CD4-positive, alpha-beta memory T cell (primary cell): ENCODE measurements at regions of chr1 and their contacts with region 1.

Region 1: GRCh38 chr1:19661721-19662228 is 2.9 kb upstream of the HTR6 start:
- DNase-seq: peak in 4 of 5 donors; percentile 49 to 66 (median 60)
- H3K4me3 ChIP-seq: no peak overlapping the region
- H3K4me3 Mint-ChIP-seq: peak overlapping the region in 1 of 8 donors; percentile 54
- H3K27ac ChIP-seq: no peak overlapping the region
- H3K27ac Mint-ChIP-seq: peak overlapping the region in 2 of 7 donors; percentile 71 to 74
- H3K4me1 ChIP-seq: peaks cover 27% of the 10 kb centered on the region
- H3K4me1 Mint-ChIP-seq: peaks cover 18 to 43% (median 29%) of the 10 kb centered on the region in 4 donors
- H3K27me3 ChIP-seq: no peaks in the 10 kb centered on the region
- H3K27me3 Mint-ChIP-seq: peaks cover 0 to 18% of the 10 kb centered on the region in 2 donors

Region 2: DNA sequence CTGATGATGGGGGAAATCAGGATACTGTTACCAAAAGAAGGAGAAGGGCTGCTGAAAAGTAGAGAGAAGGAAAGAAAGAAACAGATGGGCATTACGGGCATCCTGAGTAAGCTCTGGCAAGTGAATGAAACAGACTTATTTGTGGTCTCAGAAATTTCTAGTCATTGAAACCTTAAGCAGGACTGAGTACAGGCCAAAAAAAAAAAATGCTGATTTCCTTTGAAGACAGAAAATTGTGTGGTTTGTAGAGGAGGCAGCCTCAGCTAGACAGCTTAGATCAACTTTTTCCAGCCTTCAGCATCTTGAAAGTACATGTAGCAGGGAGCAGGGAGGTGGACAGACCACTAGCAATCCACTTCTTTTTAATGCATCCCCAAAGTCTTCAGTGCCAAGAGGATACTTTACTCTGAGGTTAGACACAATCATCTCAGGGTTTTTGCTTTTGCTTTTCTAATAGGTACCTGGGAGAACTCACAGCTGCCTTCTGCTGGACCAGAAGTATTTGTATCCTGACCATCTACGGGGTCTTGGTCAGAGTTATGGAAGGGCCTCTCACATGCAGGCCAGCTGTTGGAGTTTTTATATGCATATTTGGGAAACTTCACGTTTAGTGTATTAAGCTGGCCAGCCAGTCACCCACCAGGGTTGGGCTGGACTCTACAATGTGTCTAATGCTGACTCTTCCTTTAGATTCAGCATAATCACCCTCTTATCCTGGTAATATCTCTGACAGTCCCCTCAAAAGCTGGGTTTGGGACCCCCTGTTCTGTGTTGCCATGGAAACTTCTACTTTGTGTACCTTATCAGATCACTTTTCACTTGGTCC is 165.8 kb before region 1 on chr1:
- CTCF ChIA-PET with region 1: no interaction called
- POLR2A ChIA-PET with region 1: no interaction called
- intact Hi-C with region 1: no loop called
- DNase-seq: no peak
- H3K4me3 ChIP-seq: no peak overlapping the region
- H3K4me3 Mint-ChIP-seq: peak overlapping the region in 1 of 8 donors; percentile 17
- H3K27ac ChIP-seq: no peak overlapping the region
- H3K27ac Mint-ChIP-seq: peak overlapping the region in 3 of 7 donors; percentile 5 to 48 (median 44)
- H3K4me1 ChIP-seq: no peaks in the 10 kb centered on the region
- H3K4me1 Mint-ChIP-seq: peaks cover 18 to 34% (median 22%) of the 10 kb centered on the region in 4 donors
- H3K27me3 ChIP-seq: no peaks in the 10 kb centered on the region
- H3K27me3 Mint-ChIP-seq: no peaks in the 10 kb centered on the region

Region 3: DNA sequence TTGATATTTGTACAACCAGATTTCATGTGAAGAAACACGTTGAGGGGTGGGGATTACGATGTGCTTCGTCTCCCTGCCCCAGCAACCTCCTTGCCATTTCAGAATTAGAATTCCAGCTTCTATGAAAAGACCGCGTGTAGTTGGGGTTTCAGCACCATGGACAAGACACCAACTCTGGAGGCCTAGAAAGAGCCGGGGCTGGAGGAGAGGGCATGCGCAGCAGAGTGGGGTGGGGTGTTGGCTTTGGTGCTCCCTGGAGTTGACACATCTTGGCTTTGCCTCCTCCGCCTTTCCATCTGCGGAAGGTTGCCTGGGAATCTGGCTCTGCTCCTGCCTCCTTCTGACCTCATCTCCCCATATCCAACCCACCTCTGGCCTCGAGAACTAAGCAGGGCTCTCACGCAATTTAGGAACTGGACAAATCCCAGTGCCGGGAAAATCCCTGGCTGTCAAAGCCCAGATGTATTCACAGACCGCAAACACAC is 14.7 kb after region 1 on chr1:
- CTCF ChIA-PET with region 1: interaction called, 28 read pairs
- POLR2A ChIA-PET with region 1: no interaction called
- intact Hi-C with region 1: no loop called
- DNase-seq: no peak
- H3K4me3 ChIP-seq: no peak overlapping the region
- H3K4me3 Mint-ChIP-seq: no peak overlapping the region
- H3K27ac ChIP-seq: no peak overlapping the region
- H3K27ac Mint-ChIP-seq: no peak overlapping the region
- H3K4me1 ChIP-seq: no peaks in the 10 kb centered on the region
- H3K4me1 Mint-ChIP-seq: peaks cover 0 to 5% (median 3%) of the 10 kb centered on the region in 4 donors
- H3K27me3 ChIP-seq: no peaks in the 10 kb centered on the region
- H3K27me3 Mint-ChIP-seq: peaks cover 1 to 5% of the 10 kb centered on the region in 2 donors

Region 4: GRCh38 chr1:19688041-19688842 is 26.5 kb after region 1 on chr1:
- CTCF ChIA-PET with region 1: interaction called, 8 read pairs
- POLR2A ChIA-PET with region 1: interaction called, 3 read pairs
- intact Hi-C with region 1: loop called (anchors 2 kb)
- DNase-seq: peak in 4 of 5 donors; percentile 65 to 83 (median 78)
- H3K4me3 ChIP-seq: peak overlapping the region; percentile 4 to 20
- H3K4me3 Mint-ChIP-seq: peak overlapping the region in 7 of 8 donors; percentile 43 to 78 (median 65)
- H3K27ac ChIP-seq: peak overlapping the region; percentile 61
- H3K27ac Mint-ChIP-seq: peak overlapping the region; percentile 73 to 95 (median 91)
- H3K4me1 ChIP-seq: peaks cover 48% of the 10 kb centered on the region
- H3K4me1 Mint-ChIP-seq: peaks cover 26 to 56% (median 40%) of the 10 kb centered on the region in 4 donors
- H3K27me3 ChIP-seq: no peaks in the 10 kb centered on the region
- H3K27me3 Mint-ChIP-seq: no peaks in the 10 kb centered on the region

Region 5: GRCh38 chr1:19762175-19762779 is 100.5 kb after region 1 on chr1:
- CTCF ChIA-PET with region 1: interaction called, 10 read pairs
- POLR2A ChIA-PET with region 1: no interaction called
- intact Hi-C with region 1: no loop called
- DNase-seq: peak in 3 of 5 donors; percentile 13 to 17 (median 15)
- H3K4me3 ChIP-seq: no peak overlapping the region
- H3K4me3 Mint-ChIP-seq: no peak overlapping the region
- H3K27ac ChIP-seq: no peak overlapping the region
- H3K27ac Mint-ChIP-seq: no peak overlapping the region
- H3K4me1 ChIP-seq: no peaks in the 10 kb centered on the region
- H3K4me1 Mint-ChIP-seq: peaks cover 6 to 8% (median 7%) of the 10 kb centered on the region in 4 donors
- H3K27me3 ChIP-seq: no peaks in the 10 kb centered on the region
- H3K27me3 Mint-ChIP-seq: no peaks in the 10 kb centered on the region

Region 6: GRCh38 chr1:19785295-19786059 is 123.7 kb after region 1 on chr1:
- CTCF ChIA-PET with region 1: no interaction called
- POLR2A ChIA-PET with region 1: no interaction called
- intact Hi-C with region 1: no loop called
- DNase-seq: no peak
- H3K4me3 ChIP-seq: no peak overlapping the region
- H3K4me3 Mint-ChIP-seq: no peak overlapping the region
- H3K27ac ChIP-seq: no peak overlapping the region
- H3K27ac Mint-ChIP-seq: no peak overlapping the region
- H3K4me1 ChIP-seq: peaks cover 7% of the 10 kb centered on the region
- H3K4me1 Mint-ChIP-seq: peaks cover 6 to 11% (median 7%) of the 10 kb centered on the region in 4 donors
- H3K27me3 ChIP-seq: no peaks in the 10 kb centered on the region
- H3K27me3 Mint-ChIP-seq: no peaks in the 10 kb centered on the region

Region 7: DNA sequence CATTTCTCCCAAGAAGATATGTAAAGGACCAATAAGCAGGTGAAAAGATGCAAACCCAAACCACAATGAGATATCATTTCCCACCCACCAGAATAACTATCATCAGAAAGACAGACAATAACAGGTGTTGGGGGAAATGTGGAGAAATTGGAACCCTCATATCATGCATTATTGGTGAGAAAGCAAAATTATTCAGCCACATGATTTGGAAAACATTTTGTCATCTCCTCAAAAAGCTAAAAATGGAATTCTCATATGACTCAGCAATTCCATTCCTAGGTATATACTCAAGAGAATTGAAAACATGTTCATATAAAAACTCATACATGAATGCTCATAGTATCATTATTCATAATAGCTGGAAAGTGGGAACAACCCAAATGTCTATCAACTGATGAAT is 178.5 kb after region 1 on chr1:
- CTCF ChIA-PET with region 1: no interaction called
- POLR2A ChIA-PET with region 1: no interaction called
- intact Hi-C with region 1: no loop called
- DNase-seq: no peak
- H3K4me3 ChIP-seq: no peak overlapping the region
- H3K4me3 Mint-ChIP-seq: no peak overlapping the region
- H3K27ac ChIP-seq: no peak overlapping the region
- H3K27ac Mint-ChIP-seq: no peak overlapping the region
- H3K4me1 ChIP-seq: no peaks in the 10 kb centered on the region
- H3K4me1 Mint-ChIP-seq: peaks cover 0 to 2% (median 0%) of the 10 kb centered on the region in 4 donors
- H3K27me3 ChIP-seq: no peaks in the 10 kb centered on the region
- H3K27me3 Mint-ChIP-seq: peaks cover 15 to 19% of the 10 kb centered on the region in 2 donors